ENCODE measurements at regions of chr6 and their contacts with region 1.

Region 1: DNA sequence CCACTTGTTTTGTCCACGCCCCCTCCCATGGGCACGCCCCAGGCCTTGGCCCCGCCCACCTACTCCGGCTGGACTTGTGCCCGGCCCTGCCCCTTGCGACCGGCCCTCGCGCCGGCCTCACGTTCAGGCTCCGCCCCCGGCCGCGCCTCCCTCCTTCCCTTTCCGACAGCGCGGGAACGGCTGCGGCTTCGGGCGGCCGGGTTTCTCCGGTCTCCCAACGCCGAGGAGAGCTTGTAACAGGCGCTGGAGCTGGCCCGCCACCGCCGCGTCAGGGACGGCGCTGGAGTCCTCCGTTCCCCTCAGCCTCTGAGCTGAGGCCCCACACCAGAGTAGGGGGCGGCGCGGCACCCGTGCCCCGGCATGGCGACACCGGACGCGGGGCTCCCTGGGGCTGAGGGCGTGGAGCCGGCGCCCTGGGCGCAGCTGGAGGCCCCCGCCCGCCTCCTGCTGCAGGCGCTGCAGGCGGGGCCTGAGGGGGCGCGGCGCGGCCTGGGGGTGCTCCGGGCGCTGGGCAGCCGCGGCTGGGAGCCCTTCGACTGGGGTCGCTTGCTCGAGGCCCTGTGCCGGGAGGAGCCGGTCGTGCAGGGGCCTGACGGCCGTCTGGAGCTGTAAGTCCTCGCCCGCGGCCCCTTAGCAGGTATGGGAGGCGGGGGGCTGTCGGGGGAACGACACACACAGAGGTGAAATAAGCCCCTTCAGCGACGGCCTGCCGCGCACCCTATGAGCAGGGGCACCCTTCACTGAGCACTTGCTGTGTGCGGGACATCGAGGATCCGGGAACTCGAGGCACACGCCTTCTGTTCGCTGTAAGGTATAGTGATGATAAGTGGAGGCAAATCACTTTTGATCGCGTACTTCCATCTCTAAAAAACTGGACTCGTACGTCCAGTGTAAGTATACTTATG is at the start of gene FANCE:
- DNase-seq: peak; percentile 90 to 100
- H3K4me3 ChIP-seq: peak within 1 kb of the TSS; percentile 23 to 67 (median 59)
- H3K27ac ChIP-seq: no peak within 1 kb of the TSS
- H3K4me1 ChIP-seq: peaks cover 7 to 14% (median 10%) of the 10 kb centered on the region in 4 experiments; a peak in 6 of 7 replicates
- H3K27me3 ChIP-seq: no peaks in the 10 kb centered on the region
- CTCF ChIP-seq: no peak
- EP300 ChIP-seq: no peak
- POLR2A ChIP-seq: no peak
- RAD21 ChIP-seq: no peak
- total RNA-seq, gene FANCE: 16.1 and 16.4 TPM in 2 replicates

Region 2: GRCh38 chr6:35305117-35305516 is 147.3 kb before region 1 on chr6:
- CTCF ChIA-PET with region 1: interaction called, 161 read pairs
- POLR2A ChIA-PET with region 1: interaction called, 3 read pairs
- DNase-seq: no peak
- H3K4me3 ChIP-seq: no peak overlapping the region
- H3K27ac ChIP-seq: no peak overlapping the region
- H3K4me1 ChIP-seq: peaks cover 5 to 7% (median 6%) of the 10 kb centered on the region in 4 experiments; a peak in 5 of 7 replicates
- H3K27me3 ChIP-seq: no peaks in the 10 kb centered on the region
- CTCF ChIP-seq: 0 out of 4 replicates have a peak, but pooled peaks of 1 of the 3 experiments have one; percentile 4
- EP300 ChIP-seq: no peak
- POLR2A ChIP-seq: no peak
- RAD21 ChIP-seq: no peak

Region 3: GRCh38 chr6:35327349-35328027 is 125.0 kb before region 1 on chr6:
- CTCF ChIA-PET with region 1: interaction called, 11 read pairs
- POLR2A ChIA-PET with region 1: interaction called, 3 read pairs
- DNase-seq: peak in 1 of 2 experiments; percentile 79
- H3K4me3 ChIP-seq: no peak overlapping the region
- H3K27ac ChIP-seq: no peak overlapping the region
- H3K4me1 ChIP-seq: 0 out of 7 replicates have a peak, but pooled peaks cover 0 to under 1% (median 0%) of the 10 kb centered on the region in 4 experiments
- H3K27me3 ChIP-seq: no peaks in the 10 kb centered on the region
- CTCF ChIP-seq: peak; percentile 51 to 84 (median 74)
- EP300 ChIP-seq: no peak
- POLR2A ChIP-seq: no peak
- RAD21 ChIP-seq: peak; percentile 62 to 76

Region 4: DNA sequence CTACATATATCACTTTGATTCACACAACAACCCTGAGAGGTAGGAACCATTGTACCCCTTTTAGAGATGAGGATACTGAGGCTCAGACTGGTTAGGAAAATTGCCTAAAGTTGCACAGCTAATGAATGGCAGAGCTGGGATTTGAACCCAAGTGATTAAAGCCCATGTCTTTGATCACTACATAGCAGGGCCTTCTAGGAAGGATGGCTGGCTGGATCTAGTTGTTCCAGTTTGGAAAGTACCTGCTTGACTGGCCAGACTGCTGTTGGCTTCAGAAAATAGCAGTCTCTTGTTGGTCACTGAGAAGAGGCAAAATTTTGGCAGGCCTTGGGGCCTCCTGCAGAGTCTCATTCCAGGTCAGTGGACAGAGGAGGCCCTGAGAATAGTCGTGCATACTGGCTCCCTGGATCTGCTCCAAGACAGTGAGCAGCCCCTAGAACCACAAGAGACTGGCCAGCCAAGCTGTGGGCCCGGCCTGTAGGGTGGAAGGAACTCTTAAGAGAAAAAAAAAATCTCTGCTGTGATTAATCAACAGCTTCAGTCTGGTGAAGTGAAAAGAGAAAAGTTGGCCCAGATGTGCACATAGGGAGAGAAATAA is 92.6 kb before region 1 on chr6:
- CTCF ChIA-PET with region 1: interaction called, 11 read pairs
- POLR2A ChIA-PET with region 1: no interaction called
- DNase-seq: no peak
- H3K4me3 ChIP-seq: 0 out of 8 replicates have a peak overlapping the region, but pooled peaks of 1 of the 4 experiments have one; percentile 5
- H3K27ac ChIP-seq: peak overlapping the region; percentile 32; the same call in 1 of the 2 replicates
- H3K4me1 ChIP-seq: peaks cover 4 to 17% (median 13%) of the 10 kb centered on the region in 4 experiments
- H3K27me3 ChIP-seq: no peaks in the 10 kb centered on the region
- CTCF ChIP-seq: no peak
- EP300 ChIP-seq: no peak
- POLR2A ChIP-seq: no peak
- RAD21 ChIP-seq: no peak

Region 5: DNA sequence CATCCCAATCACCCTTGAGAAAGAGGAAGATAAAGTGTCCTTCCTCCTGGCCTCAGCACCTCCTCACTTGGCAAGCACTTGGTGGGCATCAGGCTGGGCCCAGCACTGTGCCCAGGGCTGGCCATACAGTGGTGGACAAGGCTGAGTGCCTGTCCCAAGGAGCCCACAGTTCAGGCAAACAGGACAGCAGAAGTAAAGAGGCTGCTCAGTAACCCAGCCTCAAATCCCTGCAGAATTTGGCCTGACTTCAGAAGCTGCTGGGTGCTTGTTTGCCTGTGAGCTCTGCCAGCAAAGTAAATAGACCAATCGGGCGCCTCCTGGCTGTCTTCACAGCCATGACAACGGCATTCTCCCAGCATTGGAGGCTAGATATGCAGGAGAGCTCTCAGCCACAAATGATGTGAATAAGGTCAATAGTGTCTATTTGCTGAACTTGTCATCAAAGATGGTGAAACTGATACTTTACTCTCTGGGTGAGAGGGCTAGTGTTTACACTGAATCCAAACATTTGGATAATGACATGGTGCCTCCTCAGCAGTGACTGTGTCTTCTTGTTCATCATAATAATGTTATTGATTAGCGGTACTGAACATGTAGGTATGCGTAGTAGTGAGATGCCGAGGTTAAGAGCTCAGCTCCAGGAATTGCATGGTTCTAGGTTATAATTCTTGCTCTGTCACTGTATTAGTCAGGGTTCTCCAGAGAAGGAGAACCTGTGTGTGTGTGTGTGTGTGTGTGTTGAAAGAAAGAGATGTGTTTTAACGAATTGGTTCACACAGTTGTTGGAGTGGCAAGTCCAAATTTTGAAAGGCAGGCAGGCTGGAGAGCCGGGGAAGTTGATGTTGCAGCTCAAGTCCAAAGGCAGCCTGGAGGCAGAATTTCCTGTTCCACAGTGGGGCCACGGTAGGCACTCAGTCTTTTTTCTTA is 37.1 kb before region 1 on chr6:
- CTCF ChIA-PET with region 1: interaction called, 50 read pairs
- POLR2A ChIA-PET with region 1: interaction called, 3 read pairs
- DNase-seq: no peak
- H3K4me3 ChIP-seq: no peak overlapping the region
- H3K27ac ChIP-seq: no peak overlapping the region
- H3K4me1 ChIP-seq: peaks cover 0 to 9% (median 1%) of the 10 kb centered on the region in 4 experiments; a peak in 4 of 7 replicates
- H3K27me3 ChIP-seq: no peaks in the 10 kb centered on the region
- CTCF ChIP-seq: peak; percentile 70 to 80 (median 78)
- EP300 ChIP-seq: no peak
- POLR2A ChIP-seq: no peak
- RAD21 ChIP-seq: peak; percentile 65 to 77

Region 6: DNA sequence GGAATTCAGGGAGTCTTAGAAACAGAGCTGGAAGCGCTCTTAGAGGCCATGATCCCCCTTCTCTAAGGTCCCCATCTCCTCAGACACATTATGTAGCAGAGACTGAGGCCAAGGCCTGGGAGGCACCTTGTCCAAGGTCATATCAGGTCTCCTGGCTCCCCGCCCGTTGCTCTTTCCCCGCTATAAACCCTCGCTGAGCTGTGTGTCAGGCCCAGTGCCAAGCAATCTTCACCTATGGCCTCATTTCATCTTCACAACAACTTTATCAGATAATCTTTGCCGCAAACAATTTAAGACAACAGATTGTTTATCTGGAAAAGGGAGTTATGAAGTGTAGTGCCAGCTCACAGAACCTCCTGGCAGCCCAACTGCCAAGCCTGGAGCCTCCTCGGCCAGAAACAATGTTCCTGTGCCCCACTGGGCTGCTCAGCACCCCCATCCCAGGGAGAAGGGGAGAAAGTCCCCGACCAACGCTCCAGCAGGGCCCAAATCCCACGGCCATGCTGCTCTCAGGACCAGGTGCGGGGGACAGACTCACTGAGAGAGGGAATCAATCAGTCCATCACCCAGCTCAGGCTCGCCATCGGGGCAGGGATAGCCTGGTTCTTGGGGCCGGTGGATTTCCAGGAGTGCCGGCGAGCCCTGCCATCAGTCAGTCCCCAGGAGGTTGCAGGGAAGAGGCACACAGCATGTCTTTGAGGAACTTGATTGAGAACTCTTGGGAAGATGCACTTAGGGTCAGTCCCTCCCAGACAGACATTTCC is 17.2 kb before region 1 on chr6:
- CTCF ChIA-PET with region 1: interaction called, 37 read pairs
- POLR2A ChIA-PET with region 1: no interaction called
- DNase-seq: no peak
- H3K4me3 ChIP-seq: no peak overlapping the region
- H3K27ac ChIP-seq: no peak overlapping the region
- H3K4me1 ChIP-seq: peaks cover 0 to 2% (median 0%) of the 10 kb centered on the region in 4 experiments; a peak in 1 of 7 replicates
- H3K27me3 ChIP-seq: no peaks in the 10 kb centered on the region
- CTCF ChIP-seq: no peak
- EP300 ChIP-seq: no peak
- POLR2A ChIP-seq: no peak
- RAD21 ChIP-seq: no peak